PC-9 (cell line): ENCODE measurements at regions of chrX and their contacts with region 1.

Region 1: DNA sequence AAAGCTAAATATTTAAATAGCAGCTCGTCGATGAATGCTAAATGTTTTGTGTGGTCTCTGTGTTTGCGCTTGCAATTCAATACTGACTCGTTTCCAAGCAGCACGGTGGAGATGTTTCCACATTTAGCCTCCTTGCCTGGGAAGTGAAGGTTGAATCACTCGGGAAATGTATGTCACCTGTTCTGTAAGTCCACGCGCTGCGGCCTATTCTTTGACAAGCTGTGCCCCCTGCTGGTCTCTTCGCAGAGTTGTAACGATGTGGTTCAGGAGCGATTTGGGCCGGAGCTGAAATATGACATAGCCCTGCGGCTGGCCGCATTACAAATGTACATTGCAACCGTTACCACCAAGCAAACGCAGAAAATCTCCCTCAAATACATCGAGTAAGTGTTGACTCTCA is 89.6 kb upstream of the PRPS2 start:
- DNase-seq: peak; percentile 49 to 51
- H3K4me3 ChIP-seq: no peak overlapping the region
- H3K27ac ChIP-seq: no peak overlapping the region
- H3K4me1 ChIP-seq: no peaks in the 10 kb centered on the region
- H3K27me3 ChIP-seq: no peaks in the 10 kb centered on the region
- CTCF ChIP-seq: peak; percentile 79

Region 2: DNA sequence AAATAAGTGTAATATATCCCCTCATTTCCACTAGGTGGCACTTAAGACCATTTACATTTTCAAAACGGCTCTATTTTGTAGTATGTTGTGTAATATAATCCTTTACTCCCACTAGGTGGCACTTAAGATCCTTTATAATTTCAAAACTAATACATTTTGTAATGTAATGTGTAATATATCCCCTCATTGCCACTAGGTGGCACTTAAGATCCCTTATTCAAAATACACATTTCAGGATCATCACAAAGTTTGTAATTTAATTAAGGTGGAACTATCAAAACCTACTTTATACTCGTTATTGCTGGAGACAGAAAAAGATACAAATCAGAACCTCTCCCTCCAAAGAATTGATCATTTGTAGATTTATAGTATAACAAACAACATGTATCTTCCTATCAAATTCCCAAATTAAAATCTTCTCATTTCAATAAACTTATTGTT is 1168.4 kb before region 1 on chrX:
- CTCF ChIA-PET with region 1: no interaction called
- POLR2A ChIA-PET with region 1: no interaction called
- intact Hi-C with region 1: loop called (anchors 1 kb)
- DNase-seq: peak in 1 of 2 experiments; percentile 76
- H3K4me3 ChIP-seq: no peak overlapping the region
- H3K27ac ChIP-seq: no peak overlapping the region
- H3K4me1 ChIP-seq: no peaks in the 10 kb centered on the region
- H3K27me3 ChIP-seq: no peaks in the 10 kb centered on the region
- CTCF ChIP-seq: peak; percentile 88

Region 3: DNA sequence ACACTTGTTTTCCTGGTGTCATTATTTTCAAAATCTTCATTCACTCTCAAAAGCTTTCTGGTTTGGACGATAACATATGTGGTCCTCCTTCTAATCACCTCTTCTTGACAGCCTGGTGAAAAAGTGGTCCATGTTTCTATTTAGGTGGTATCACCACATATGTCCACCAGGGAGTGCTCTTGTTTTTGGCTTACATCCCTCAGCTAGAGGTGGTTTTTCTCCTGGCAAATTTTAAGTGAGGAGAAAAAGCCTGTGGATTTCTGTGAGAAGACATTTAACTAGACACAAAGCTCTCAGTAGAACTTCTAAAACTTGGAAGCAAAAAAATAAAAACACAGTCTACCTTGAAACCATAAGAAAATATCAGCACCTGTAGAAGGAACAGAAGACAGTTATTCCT is 621.4 kb before region 1 on chrX:
- CTCF ChIA-PET with region 1: no interaction called
- POLR2A ChIA-PET with region 1: no interaction called
- intact Hi-C with region 1: loop called (anchors 1 kb)
- DNase-seq: peak in 1 of 2 experiments; percentile 40
- H3K4me3 ChIP-seq: no peak overlapping the region
- H3K27ac ChIP-seq: no peak overlapping the region
- H3K4me1 ChIP-seq: no peaks in the 10 kb centered on the region
- H3K27me3 ChIP-seq: no peaks in the 10 kb centered on the region
- CTCF ChIP-seq: peak; percentile 63

Region 4: DNA sequence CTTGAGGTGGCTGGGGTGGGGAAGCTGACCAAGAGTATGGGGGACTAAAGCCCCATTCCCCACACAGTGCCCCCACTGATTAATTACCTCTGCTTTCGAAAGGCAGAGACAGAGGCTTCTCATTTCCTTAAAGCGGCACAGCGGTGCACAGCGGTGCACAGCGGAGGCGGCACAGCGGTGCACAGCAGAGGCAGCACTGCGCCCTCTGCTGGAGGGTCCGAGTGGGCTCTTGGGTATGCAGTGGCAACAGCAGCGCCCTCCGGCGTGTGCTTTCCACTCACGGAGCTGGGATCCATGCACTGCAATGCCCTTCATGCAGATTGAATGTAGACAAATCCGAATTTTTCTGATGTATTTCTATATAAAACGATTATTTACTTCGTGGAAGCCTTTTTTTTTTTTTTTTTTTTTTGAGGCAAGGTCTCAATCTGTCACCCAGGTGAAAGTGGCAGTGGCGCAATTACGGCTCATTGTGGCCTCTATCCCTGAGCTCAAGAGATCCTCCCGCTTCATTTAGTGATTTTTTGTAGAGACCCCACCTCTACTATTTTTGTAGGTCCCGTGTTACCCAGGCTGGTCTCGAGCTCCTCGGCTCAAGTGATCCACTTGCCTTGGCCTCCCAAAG is 69.9 kb after region 1 on chrX:
- CTCF ChIA-PET with region 1: no interaction called
- POLR2A ChIA-PET with region 1: no interaction called
- intact Hi-C with region 1: loop called (anchors 2 kb)
- DNase-seq: peak in 1 of 2 experiments; percentile 31
- H3K4me3 ChIP-seq: no peak overlapping the region
- H3K27ac ChIP-seq: no peak overlapping the region
- H3K4me1 ChIP-seq: no peaks in the 10 kb centered on the region; the same call in 1 of the 2 replicates
- H3K27me3 ChIP-seq: no peaks in the 10 kb centered on the region
- CTCF ChIP-seq: peak; percentile 67

Region 5: DNA sequence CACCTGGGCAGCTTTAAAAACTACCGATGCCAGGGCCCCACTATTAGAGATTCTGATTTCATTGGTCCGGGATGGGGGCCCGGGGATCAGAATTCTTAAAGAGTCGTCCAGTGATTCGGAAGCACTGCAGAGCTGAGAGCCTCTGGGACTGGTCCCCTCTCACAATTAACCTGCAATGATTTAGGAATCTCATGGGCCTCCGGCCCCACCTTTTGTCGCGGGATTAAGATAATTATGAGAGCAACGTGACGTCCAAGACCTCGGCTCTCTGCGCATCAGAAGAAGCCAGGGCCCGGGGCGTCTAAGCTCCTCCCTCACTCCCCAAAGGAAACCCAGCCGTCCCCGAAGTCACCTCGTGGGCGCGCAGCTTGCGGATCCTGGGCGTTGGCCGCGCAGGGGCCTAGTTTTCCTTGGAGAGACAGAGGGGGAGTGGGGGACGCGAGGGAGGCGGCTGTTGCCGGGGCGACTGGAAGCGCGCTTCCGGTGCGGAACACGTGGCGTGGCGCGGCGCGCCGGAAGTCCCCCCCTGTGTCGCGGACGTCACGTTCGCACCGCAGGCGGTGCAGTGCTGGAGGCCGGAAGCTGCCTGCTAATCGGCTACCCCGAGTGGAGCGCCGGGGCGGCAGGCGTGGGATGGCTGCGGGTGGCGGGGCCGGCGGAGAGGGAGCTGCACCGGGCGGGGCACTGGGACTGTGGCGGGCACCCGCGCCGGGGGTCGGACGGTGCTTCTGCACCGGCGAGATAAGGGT is 1328.0 kb after region 1 on chrX and contains the start of gene GEMIN8:
- CTCF ChIA-PET with region 1: no interaction called
- POLR2A ChIA-PET with region 1: no interaction called
- intact Hi-C with region 1: loop called (anchors 2 kb)
- DNase-seq: peak; percentile 81 to 84
- H3K4me3 ChIP-seq: peak within 1 kb of the TSS; percentile 70
- H3K27ac ChIP-seq: peak within 1 kb of the TSS; percentile 77
- H3K4me1 ChIP-seq: peaks cover 30% of the 10 kb centered on the region
- H3K27me3 ChIP-seq: no peaks in the 10 kb centered on the region
- CTCF ChIP-seq: no peak
- total RNA-seq, gene GEMIN8: 17.1 and 18.8 TPM in 2 replicates